ENCODE measurements at regions of chr2 and their contacts with region 1.

Region 1: GRCh38 chr2:207473049-207473930 is 56.5 kb upstream of the CREB1 start:
- DNase-seq: no peak
- ATAC-seq: peak; percentile 43 to 85 (median 78)
- H3K4me3 ChIP-seq: no peak overlapping the region
- H3K27ac ChIP-seq: no peak overlapping the region
- H3K4me1 ChIP-seq: no peaks in the 10 kb centered on the region
- H3K27me3 ChIP-seq: no peaks in the 10 kb centered on the region
- CTCF ChIP-seq: peak in 1 of 4 donors; percentile 30

Region 2: DNA sequence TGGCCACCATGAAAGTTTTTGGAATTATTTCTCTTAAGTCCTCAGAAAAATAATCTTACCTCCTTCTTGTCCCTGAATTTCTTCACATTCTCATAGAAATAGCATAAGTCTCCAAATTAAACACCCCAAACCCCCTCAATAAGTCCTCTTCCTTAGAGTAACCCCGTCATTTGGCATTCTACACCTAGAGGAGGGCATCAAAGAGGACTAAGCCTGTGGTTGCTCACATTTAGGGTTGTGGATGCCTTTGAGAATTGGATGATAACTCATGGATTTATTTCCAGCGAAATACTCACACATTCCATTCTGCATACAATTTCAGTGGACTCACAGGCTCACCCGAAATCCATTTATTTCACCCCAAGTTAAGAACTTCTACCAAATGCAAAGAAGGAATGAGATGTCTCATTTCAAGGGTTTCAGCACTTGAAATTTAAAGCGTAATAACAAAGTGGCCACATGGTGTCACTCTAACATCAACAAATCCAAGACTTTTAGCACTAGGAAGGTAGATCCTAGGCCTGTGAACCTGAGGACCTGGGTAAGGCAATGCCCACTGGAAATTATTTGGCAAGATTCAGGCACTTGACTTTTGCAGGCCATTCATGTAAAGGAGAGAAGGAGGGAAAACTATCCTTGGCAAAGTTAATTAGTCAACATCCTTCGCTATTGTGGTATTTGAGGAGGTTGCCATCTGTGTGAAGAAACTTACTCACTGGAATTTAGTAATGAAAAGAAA is 779.7 kb before region 1 on chr2:
- intact Hi-C with region 1: loop called in 1 of 3 experiments (anchors 10 kb)
- DNase-seq: peak in 2 of 6 donors; percentile 7 to 21
- ATAC-seq: peak; percentile 46 to 86 (median 82)
- H3K4me3 ChIP-seq: no peak overlapping the region
- H3K27ac ChIP-seq: no peak overlapping the region
- H3K4me1 ChIP-seq: no peaks in the 10 kb centered on the region
- H3K27me3 ChIP-seq: no peaks in the 10 kb centered on the region
- CTCF ChIP-seq: peak; percentile 21 to 50 (median 43)

Region 3: DNA sequence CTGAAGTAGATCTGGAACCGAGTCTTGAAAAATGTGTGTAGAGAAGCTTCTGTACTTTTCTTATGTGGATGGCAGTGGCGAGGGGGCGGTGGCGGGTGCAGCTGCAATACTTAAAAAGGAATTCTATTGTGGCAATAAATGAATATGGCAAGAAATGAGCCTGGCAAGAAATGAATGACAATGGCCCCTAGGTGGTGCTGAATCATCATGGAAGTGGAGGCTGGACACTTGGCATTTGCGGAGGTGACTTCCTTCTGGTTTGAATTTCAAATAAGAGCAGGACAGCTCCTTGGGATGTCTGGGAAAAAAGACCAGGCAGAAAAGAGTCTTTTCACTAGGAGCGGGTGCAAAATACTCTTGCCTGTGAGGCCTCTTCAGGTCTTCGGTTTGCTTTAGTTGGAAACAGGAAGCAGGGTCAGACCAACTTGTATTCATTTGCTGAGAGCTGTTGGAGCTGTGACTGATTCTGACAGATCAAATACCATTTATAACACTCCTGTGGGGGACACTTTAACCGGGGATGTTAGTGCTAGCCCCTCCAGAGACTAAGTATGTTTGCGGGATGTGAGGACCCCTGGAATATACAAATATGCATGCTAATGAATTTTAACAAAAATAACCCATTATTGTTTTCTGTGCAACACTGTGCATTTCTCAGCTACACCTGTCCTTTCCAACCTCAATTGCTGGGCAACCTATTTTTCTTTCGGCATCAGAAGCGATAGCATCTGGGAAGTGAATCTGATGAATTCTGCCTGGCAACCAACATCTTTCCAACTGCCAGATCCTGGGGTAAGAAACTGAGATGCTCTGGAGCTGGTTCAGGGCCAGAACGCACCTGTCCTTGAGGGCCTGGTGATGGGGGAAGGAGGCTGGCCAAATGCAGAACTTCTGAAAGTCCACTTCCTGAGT is 672.5 kb before region 1 on chr2:
- intact Hi-C with region 1: loop called in 2 of 3 experiments (anchors 5 to 10 kb)
- DNase-seq: peak in 3 of 6 donors; percentile 6 to 59 (median 41)
- ATAC-seq: peak; percentile 72 to 89 (median 86)
- H3K4me3 ChIP-seq: no peak overlapping the region
- H3K27ac ChIP-seq: no peak overlapping the region
- H3K4me1 ChIP-seq: no peaks in the 10 kb centered on the region
- H3K27me3 ChIP-seq: no peaks in the 10 kb centered on the region
- CTCF ChIP-seq: peak in 3 of 4 donors; percentile 35 to 45 (median 38)

Region 4: DNA sequence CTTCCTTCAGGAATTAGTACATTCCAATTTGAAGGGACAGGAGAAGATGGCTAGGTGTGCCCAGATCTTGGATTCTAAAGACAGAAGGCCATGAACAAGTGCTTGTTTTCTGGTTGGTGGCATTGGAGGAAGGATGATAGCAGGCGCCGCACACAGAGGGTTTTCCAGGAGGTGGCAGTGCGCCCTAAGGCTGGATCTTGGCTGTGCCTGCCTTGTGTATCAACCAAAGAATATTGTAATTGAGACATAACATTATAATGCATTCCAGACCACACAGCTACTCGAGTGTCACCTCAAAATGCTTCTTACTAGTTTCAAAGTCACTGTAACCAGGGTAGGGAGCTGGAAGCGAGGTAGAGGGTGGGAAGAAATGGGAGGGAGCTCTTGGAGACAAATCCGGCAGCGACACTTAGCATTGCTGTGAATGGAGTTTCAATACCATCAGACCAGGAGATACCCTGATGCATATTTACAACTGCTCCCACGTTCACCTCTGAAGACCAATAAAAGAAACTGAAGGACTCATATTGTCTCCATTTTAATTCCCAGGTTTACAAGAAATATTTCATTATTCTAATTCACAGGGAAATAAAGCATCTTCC is 491.4 kb before region 1 on chr2:
- intact Hi-C with region 1: loop called in 2 of 3 experiments (anchors 5 kb)
- DNase-seq: peak in 4 of 6 donors; percentile 23 to 57 (median 34)
- ATAC-seq: peak in 3 of 4 donors; percentile 77 to 90 (median 78)
- H3K4me3 ChIP-seq: no peak overlapping the region
- H3K27ac ChIP-seq: no peak overlapping the region
- H3K4me1 ChIP-seq: no peaks in the 10 kb centered on the region
- H3K27me3 ChIP-seq: no peaks in the 10 kb centered on the region
- CTCF ChIP-seq: peak in 3 of 4 donors; percentile 13 to 39 (median 36)

Measured in pancreas (tissue), 10 donors.